ENCODE measurements at regions of chr12 and their contacts with region 1.

Region 1: DNA sequence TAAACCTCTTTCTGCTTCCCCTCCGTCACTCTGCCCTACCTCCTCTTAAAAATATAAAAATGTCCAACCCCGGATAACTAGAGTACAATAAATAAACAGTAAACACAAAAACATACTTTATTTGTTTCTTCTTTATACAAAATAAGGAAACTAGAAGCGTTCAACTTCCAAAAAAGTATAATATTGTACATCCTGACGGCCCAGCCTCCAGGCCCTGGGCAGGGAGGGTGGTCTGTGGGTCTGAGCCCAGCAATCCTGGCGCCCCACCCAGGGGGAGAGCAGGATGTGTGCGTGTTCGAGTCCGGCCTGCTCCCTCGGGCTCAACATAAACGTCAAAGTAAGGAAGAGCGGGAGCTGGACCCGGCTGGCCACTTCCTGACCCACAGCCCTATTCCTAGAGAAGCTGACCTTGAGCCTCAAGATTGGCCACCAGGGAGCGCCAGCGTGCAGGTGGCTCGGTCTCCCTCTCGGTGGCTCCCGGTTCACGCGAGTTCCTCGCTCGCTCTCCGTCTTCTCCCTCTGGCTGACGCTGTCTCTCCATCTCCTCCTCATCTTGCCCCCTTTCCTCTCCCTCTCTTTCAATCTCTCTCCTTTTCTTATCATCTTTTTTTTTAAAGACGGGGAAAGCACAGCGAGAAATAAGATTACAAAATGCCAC is 9.4 kb downstream of the LHX5 start:
- DNase-seq: peak; percentile 78 to 90 (median 84)
- ATAC-seq: peak; percentile 94
- H3K4me3 ChIP-seq: no peak overlapping the region
- H3K27ac ChIP-seq: no peak overlapping the region
- H3K4me1 ChIP-seq: peaks cover 0 to 44% of the 10 kb centered on the region in 2 experiments; a peak in 3 of 5 replicates
- H3K27me3 ChIP-seq: peaks cover 30 to 53% of the 10 kb centered on the region in 2 experiments
- CTCF ChIP-seq: peak; percentile 90 to 95 (median 95)
- EP300 ChIP-seq: no peak
- POLR2A ChIP-seq: no peak
- RAD21 ChIP-seq: peak; percentile 73 to 92

Region 2: DNA sequence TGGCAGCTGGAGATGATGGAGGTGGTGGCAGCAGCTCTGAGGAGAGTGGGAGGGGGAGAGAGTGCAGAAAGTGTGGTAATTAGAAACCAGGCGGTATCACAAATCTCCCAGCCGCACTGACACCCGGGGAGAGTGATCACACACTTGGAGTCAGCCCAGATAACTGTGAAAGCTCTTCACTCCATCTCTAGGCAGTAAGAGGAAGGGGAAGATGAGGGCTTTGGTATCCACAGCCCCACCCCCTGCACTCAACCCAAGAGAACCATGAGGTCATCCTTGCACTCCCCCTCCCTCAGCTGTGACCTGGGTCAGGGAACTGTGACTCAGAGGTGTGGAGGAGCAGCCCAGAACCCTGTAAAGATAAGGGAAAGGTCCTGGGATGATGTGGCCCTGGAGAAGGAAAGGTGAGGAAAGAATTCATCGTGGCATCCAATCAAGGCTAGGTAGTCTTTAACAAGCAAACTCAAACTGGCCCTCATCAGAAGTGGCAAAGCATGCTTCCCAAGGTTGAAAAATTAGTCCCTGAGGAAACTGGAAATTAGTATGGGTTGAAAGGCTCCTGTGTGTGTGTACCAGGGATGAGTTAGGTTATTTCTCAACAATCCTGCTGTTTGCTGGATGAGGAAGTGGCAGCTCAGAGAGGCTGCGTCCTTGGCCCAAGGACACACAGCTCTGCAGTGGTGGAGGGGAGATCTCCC is 120.4 kb after region 1 on chr12:
- CTCF ChIA-PET with region 1: no interaction called
- POLR2A ChIA-PET with region 1: no interaction called
- in situ Hi-C with region 1: no loop called
- intact Hi-C with region 1: loop called (anchors 10 kb)
- DNase-seq: peak; percentile 90 to 91 (median 91)
- ATAC-seq: peak; percentile 97
- H3K4me3 ChIP-seq: no peak overlapping the region
- H3K27ac ChIP-seq: peak overlapping the region; percentile 43; the same call in 2 of the 3 replicates
- H3K4me1 ChIP-seq: peaks cover 4 to 31% of the 10 kb centered on the region in 2 experiments; a peak in 4 of 5 replicates
- H3K27me3 ChIP-seq: peaks cover 0 to under 1% of the 10 kb centered on the region in 2 experiments; a peak in 1 of 5 replicates
- CTCF ChIP-seq: peak; percentile 17 to 52 (median 19); a peak in 3 of 6 replicates
- EP300 ChIP-seq: peak; percentile 87
- POLR2A ChIP-seq: no peak
- RAD21 ChIP-seq: peak; percentile 18 to 56; a peak in 2 of 4 replicates

Region 3: DNA sequence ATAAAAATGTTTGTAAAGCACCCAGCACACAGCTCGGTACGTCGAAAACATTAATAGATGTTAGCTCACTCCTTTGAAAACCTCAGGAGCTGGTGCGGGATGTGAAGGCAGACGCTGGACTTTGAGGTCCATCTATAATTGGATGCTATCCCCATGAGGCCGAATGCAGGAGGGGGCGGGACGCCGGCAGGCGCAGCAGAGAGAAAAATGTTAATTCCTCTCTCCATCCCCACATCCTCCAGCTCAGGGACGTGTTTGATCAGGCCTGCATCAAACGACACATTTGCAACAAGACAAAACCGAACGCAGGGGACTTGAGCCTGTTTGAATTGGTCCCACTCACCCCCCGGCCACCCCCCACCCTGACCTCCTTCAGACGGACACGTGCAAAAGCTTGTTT is 272.9 kb after region 1 on chr12:
- CTCF ChIA-PET with region 1: interaction called, 11 read pairs
- POLR2A ChIA-PET with region 1: no interaction called
- in situ Hi-C with region 1: no loop called
- intact Hi-C with region 1: loop called (anchors 2 kb)
- DNase-seq: no peak
- ATAC-seq: no peak
- H3K4me3 ChIP-seq: no peak overlapping the region
- H3K27ac ChIP-seq: no peak overlapping the region
- H3K4me1 ChIP-seq: no peaks in the 10 kb centered on the region
- H3K27me3 ChIP-seq: peaks cover 0 to 9% of the 10 kb centered on the region in 2 experiments; a peak in 2 of 5 replicates
- CTCF ChIP-seq: no peak
- EP300 ChIP-seq: no peak
- POLR2A ChIP-seq: no peak
- RAD21 ChIP-seq: no peak

Measured in K562 (cell line).